ENCODE measurements at regions of chr18 and their contacts with region 1.

Region 1: DNA sequence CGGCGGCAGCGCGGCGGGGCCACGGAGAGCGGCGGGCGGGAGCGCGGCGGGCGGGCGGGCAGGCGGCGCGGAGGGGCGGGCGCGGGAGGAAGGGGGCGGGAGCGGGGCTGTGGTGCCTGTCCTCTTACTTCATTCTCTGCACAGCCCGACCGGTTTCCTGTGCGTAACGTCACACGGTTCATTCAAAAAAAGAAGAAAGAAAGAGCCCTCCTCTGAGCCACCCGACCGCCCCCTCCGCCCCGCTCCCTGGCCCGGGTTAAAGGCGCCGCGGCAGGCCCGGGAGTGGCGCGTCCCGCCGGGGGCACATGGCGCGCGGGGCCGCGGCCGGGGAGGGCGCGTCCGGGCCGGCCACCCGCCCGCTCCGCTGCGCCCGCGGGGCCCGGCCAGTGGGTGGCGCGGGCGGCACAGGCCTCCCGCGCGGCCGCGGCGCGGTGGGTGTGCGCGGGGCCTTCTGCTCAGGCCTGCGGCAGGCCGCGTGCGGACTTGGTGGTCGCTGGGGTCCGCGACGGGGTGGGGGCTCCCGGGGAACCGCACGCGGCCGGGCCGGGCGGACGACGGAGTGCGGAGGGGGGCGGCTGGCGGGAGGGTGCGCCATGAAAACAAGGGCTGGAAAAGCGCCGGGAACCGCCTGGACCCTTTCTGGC is 599 bp upstream of the BCL2 start:
- DNase-seq: peak; percentile 71
- H3K4me3 ChIP-seq: peak overlapping the region; percentile 4 to 66 (median 43)
- H3K27ac ChIP-seq: peak overlapping the region; percentile 44
- H3K4me1 ChIP-seq: peaks cover 25% of the 10 kb centered on the region
- H3K27me3 ChIP-seq: peaks cover 0 to 9% of the 10 kb centered on the region in 2 experiments
- CTCF ChIP-seq: no peak
- POLR2A ChIP-seq: no peak

Region 2: GRCh38 chr18:63025251-63026090 is 294.7 kb before region 1 on chr18:
- CTCF ChIA-PET with region 1: interaction called, 20 read pairs
- POLR2A ChIA-PET with region 1: no interaction called
- dilution Hi-C with region 1: no loop called
- intact Hi-C with region 1: no loop called
- DNase-seq: no peak
- H3K4me3 ChIP-seq: no peak overlapping the region
- H3K27ac ChIP-seq: no peak overlapping the region
- H3K4me1 ChIP-seq: no peaks in the 10 kb centered on the region
- H3K27me3 ChIP-seq: peaks cover 0 to 3% of the 10 kb centered on the region in 2 experiments
- CTCF ChIP-seq: peak in 1 of 2 donors; percentile 5
- POLR2A ChIP-seq: no peak

Region 3: GRCh38 chr18:63138436-63139340 is 181.5 kb before region 1 on chr18:
- CTCF ChIA-PET with region 1: interaction called, 96 read pairs
- POLR2A ChIA-PET with region 1: no interaction called
- dilution Hi-C with region 1: no loop called
- intact Hi-C with region 1: loop called (anchors 1 kb)
- DNase-seq: no peak
- H3K4me3 ChIP-seq: peak overlapping the region in 1 of 3 experiments; percentile 16
- H3K27ac ChIP-seq: peak overlapping the region; percentile 75
- H3K4me1 ChIP-seq: peaks cover 22% of the 10 kb centered on the region
- H3K27me3 ChIP-seq: no peaks in the 10 kb centered on the region
- CTCF ChIP-seq: no peak
- POLR2A ChIP-seq: no peak

Region 4: DNA sequence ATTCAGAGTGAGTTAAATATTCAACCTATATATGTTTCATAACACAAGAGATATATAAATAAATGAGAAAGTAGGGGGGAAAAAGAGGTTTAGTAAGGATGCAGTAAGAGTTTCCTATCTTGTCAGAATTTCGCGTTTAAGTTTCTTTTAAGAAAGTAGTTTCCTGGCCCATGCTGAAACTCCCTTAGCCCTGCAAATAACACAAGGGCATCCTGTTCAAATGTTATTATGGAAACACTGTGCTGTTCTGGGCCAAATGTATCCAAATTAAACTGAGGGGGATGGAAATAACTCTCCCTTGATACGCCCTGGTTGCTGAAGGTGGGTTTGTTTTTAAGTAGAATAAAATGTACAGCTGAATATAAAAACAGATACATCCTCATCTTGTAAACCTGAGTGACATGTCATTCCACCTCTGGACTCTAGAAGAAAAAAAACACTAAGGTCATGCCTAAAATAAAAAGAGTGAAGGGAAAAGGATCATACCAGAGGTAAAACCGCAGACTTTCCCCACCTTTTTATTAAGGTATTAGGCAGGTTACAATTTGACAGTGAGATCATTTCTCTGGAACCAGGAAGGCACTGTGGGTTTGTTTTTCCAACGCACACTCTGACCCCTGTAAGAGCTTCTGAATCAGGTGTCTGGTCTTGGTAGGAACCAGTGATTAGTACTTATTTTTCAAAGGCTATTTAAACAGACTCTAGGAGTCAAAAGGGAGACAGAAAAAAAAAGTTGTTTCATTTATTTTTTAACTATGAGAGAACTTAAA is 17.3 kb before region 1 on chr18:
- CTCF ChIA-PET with region 1: interaction called, 5 read pairs
- POLR2A ChIA-PET with region 1: no interaction called
- dilution Hi-C with region 1: no loop called
- intact Hi-C with region 1: loop called (anchors 1 kb)
- DNase-seq: no peak
- H3K4me3 ChIP-seq: no peak overlapping the region
- H3K27ac ChIP-seq: no peak overlapping the region
- H3K4me1 ChIP-seq: peaks cover 3% of the 10 kb centered on the region
- H3K27me3 ChIP-seq: no peaks in the 10 kb centered on the region
- CTCF ChIP-seq: no peak
- POLR2A ChIP-seq: no peak

Region 5: GRCh38 chr18:63422087-63422809 is 102.1 kb after region 1 on chr18 and contains the start of gene VPS4B:
- CTCF ChIA-PET with region 1: no interaction called
- POLR2A ChIA-PET with region 1: no interaction called
- dilution Hi-C with region 1: no loop called
- intact Hi-C with region 1: loop called (anchors 5 kb)
- DNase-seq: peak; percentile 100
- H3K4me3 ChIP-seq: peak within 1 kb of the TSS; percentile 67 to 95 (median 83)
- H3K27ac ChIP-seq: peak within 1 kb of the TSS; percentile 69
- H3K4me1 ChIP-seq: peaks cover 10% of the 10 kb centered on the region
- H3K27me3 ChIP-seq: peaks cover 2 to 3% of the 10 kb centered on the region in 2 experiments
- CTCF ChIP-seq: no peak
- POLR2A ChIP-seq: peak; percentile 79
- total RNA-seq, gene VPS4B: 50.2 and 54.7 TPM in 2 replicates